IMR-90 (cell line): ENCODE measurements at regions of chr4 and their contacts with region 1.

Region 1: GRCh38 chr4:169566021-169566818 is 46.2 kb downstream of the NEK1 start:
- DNase-seq: peak; percentile 67
- ATAC-seq: peak; percentile 92
- H3K4me3 ChIP-seq: no peak overlapping the region
- H3K27ac ChIP-seq: no peak overlapping the region
- H3K4me1 ChIP-seq: no peaks in the 10 kb centered on the region
- H3K27me3 ChIP-seq: no peaks in the 10 kb centered on the region
- CTCF ChIP-seq: peak; percentile 74
- POLR2A ChIP-seq: no peak
- RAD21 ChIP-seq: peak; percentile 60

Region 2: GRCh38 chr4:169024762-169025161 is 541.5 kb before region 1 on chr4:
- CTCF ChIA-PET with region 1: interaction called, 3 read pairs
- POLR2A ChIA-PET with region 1: no interaction called
- dilution Hi-C with region 1: no loop called
- in situ Hi-C with region 1: no loop called
- intact Hi-C with region 1: loop called (anchors 10 kb)
- DNase-seq: peak; percentile 59
- ATAC-seq: peak; percentile 95
- H3K4me3 ChIP-seq: no peak overlapping the region
- H3K27ac ChIP-seq: no peak overlapping the region
- H3K4me1 ChIP-seq: no peaks in the 10 kb centered on the region
- H3K27me3 ChIP-seq: 0 out of 2 replicates have a peak, but pooled peaks cover 2% of the 10 kb centered on the region
- CTCF ChIP-seq: peak; percentile 68
- POLR2A ChIP-seq: no peak
- RAD21 ChIP-seq: peak; percentile 79

Region 3: DNA sequence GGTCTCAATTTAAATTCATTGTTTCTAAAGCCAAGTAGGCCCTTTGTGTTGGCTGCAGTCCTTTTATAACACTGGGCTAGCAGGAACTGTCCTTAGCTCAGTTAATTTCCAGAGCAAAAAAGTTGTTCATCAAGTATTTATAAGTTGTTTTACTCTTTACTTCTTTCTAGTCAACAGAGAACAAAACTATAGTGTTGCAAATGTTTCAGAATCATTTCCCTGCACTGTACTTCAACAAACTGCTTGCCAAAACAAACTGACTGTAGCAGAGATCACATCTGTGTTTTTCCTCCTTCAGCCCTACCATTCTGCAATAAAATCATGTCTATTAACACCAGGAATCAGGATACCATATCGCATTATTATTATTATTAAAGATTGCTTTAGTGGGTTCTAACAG is 127.0 kb before region 1 on chr4:
- CTCF ChIA-PET with region 1: no interaction called
- POLR2A ChIA-PET with region 1: no interaction called
- dilution Hi-C with region 1: no loop called
- in situ Hi-C with region 1: no loop called
- intact Hi-C with region 1: no loop called
- DNase-seq: peak; percentile 47
- ATAC-seq: peak; percentile 69
- H3K4me3 ChIP-seq: no peak overlapping the region
- H3K27ac ChIP-seq: no peak overlapping the region
- H3K4me1 ChIP-seq: no peaks in the 10 kb centered on the region
- H3K27me3 ChIP-seq: no peaks in the 10 kb centered on the region
- CTCF ChIP-seq: no peak
- POLR2A ChIP-seq: no peak
- RAD21 ChIP-seq: no peak

Region 4: GRCh38 chr4:169492438-169493163 is 73.6 kb before region 1 on chr4:
- CTCF ChIA-PET with region 1: interaction called, 4 read pairs
- POLR2A ChIA-PET with region 1: no interaction called
- dilution Hi-C with region 1: no loop called
- in situ Hi-C with region 1: no loop called
- intact Hi-C with region 1: loop called (anchors 1 kb)
- DNase-seq: peak; percentile 44
- ATAC-seq: peak; percentile 96
- H3K4me3 ChIP-seq: no peak overlapping the region
- H3K27ac ChIP-seq: no peak overlapping the region
- H3K4me1 ChIP-seq: no peaks in the 10 kb centered on the region
- H3K27me3 ChIP-seq: no peaks in the 10 kb centered on the region
- CTCF ChIP-seq: peak; percentile 81
- POLR2A ChIP-seq: no peak
- RAD21 ChIP-seq: peak; percentile 83

Region 5: GRCh38 chr4:169649545-169650226 is 83.5 kb after region 1 on chr4:
- CTCF ChIA-PET with region 1: no interaction called
- POLR2A ChIA-PET with region 1: no interaction called
- dilution Hi-C with region 1: no loop called
- in situ Hi-C with region 1: no loop called
- intact Hi-C with region 1: no loop called
- DNase-seq: no peak
- ATAC-seq: no peak
- H3K4me3 ChIP-seq: no peak overlapping the region
- H3K27ac ChIP-seq: no peak overlapping the region
- H3K4me1 ChIP-seq: peaks cover 2% of the 10 kb centered on the region; the same call in 1 of the 2 replicates
- H3K27me3 ChIP-seq: no peaks in the 10 kb centered on the region
- CTCF ChIP-seq: no peak
- POLR2A ChIP-seq: no peak
- RAD21 ChIP-seq: no peak